ENCODE measurements at regions of chr15 and their contacts with region 1.

Region 1: DNA sequence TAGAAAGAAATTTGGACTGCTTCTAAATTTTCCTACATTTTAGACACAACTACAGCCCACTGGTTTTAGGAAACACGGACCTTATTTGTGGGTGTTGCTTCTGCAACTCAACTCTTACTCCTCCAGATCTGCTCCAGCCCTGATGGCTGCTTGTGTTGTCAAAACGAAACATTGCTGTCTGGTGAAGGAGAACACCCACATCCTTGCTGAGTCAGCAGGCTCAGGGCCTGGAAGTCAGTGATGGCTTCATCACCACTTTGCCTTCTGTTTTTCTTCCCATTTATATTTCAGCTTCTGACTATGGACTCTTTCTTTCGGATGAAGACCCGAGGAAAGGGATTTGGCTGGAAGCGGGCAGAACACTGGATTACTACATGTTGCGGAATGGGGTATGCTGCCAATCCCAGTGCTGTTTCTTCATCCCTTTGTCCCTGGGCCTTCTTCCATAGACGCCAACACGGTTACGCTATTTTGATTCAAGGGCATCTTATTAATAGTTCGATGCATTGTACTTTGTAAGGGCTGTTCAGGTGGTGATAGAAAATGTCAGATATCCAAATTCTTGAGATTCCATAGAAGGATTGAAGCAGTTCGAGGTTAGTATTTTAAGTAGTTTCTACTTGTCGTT is 392.6 kb upstream of the TPM1 start:
- DNase-seq: no peak
- H3K4me3 ChIP-seq: no peak overlapping the region
- H3K27ac ChIP-seq: no peak overlapping the region
- H3K4me1 ChIP-seq: peaks cover 0 to 8% (median 4%) of the 10 kb centered on the region in 4 donors
- H3K27me3 ChIP-seq: no peaks in the 10 kb centered on the region
- CTCF ChIP-seq: no peak
- EP300 ChIP-seq: no peak
- POLR2A ChIP-seq: no peak

Region 2: GRCh38 chr15:62406305-62406891 is 243.5 kb before region 1 on chr15:
- intact Hi-C with region 1: loop called (anchors 5 kb)
- DNase-seq: no peak
- H3K4me3 ChIP-seq: no peak overlapping the region
- H3K27ac ChIP-seq: no peak overlapping the region
- H3K4me1 ChIP-seq: peaks cover 0 to 37% (median 3%) of the 10 kb centered on the region in 4 donors
- H3K27me3 ChIP-seq: no peaks in the 10 kb centered on the region
- CTCF ChIP-seq: no peak
- EP300 ChIP-seq: no peak
- POLR2A ChIP-seq: no peak

Region 3: DNA sequence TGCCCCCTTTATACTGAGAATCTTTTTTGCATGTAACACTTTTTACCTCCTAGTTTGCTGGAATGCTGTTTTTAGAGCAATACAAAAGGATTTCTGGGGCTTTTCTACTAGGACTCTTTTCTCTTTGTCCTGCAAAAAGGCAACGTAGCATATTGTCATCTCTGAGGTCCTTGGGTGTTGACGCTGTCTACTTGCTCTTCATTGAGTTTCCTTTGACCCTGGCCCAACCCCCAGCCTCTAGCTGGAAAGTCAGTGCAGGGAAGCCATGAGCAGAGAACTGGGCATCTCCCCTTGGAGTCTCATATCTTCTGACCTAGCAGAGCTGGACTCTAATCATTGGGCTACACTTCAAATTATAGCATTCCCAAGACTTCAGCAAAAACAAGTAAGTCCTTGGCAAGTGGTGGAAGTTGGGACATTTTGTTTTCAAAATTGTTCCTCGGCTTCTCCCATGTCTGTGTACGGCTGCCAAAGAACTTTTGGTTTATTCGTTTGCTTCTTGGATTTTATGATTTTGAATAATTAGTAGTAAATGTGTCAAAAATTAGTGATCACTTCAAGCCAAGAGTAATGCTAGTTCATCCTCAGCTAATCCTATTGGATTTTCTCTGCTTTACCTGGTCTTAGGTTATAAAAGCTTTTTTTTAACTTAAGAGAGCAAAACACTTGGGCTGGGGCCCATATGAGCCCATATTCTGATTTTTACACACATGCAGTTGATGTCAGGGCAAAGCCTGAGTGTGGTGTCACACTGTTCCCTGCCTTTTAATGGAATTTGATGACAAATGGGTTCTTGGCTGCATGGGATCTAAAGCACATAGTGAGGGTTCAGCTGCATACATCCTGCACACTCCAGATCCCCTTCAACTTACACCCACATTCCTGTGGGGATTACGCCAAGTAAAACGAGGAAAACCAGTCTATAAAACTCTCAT is 65.3 kb before region 1 on chr15:
- intact Hi-C with region 1: no loop called
- DNase-seq: no peak
- H3K4me3 ChIP-seq: no peak overlapping the region
- H3K27ac ChIP-seq: no peak overlapping the region
- H3K4me1 ChIP-seq: peaks cover 0 to 21% (median 6%) of the 10 kb centered on the region in 4 donors
- H3K27me3 ChIP-seq: no peaks in the 10 kb centered on the region
- CTCF ChIP-seq: no peak
- EP300 ChIP-seq: no peak
- POLR2A ChIP-seq: no peak

Region 4: DNA sequence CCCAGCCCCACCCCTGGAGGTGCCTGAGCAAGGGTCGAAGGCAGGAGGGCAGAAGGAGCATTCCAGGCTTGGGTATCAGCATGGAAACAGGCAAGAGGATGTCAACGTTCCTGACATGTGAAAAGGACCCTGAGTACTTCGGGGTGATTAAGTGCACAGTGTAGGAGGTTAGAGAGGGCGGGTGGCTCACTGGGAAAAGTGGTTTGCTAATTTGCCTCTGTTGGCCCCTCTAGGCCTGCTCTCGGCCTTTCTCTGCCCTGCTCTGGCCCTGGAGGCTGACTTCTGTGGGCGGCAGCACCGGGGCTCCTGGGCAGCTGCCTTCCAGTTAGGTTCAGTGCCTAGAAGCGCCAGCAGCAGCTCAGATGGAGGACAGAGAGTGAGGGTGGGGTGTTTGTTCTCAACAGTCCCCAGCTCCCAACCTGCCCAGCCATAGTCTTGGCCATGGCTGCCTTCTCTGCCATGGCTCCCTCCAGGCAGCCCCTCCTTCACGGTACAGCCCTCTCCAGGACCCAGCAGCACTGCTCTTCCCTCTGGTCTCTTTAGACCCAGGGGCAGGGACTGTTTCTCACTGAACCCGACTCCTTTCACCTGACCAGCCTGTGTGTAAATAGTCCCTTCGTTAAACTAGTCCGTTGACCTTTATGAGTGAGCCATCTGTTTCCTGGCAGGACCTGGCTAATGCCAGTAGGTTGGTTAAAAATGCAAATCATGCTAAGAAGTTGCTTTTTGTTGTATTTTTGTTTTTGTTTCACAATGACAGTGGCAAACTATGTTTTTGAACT is 285.6 kb after region 1 on chr15:
- intact Hi-C with region 1: no loop called
- DNase-seq: no peak
- H3K4me3 ChIP-seq: no peak overlapping the region
- H3K27ac ChIP-seq: peak overlapping the region in 1 of 5 donors; percentile 35
- H3K4me1 ChIP-seq: peaks cover 12 to 21% (median 15%) of the 10 kb centered on the region in 4 donors
- H3K27me3 ChIP-seq: no peaks in the 10 kb centered on the region
- CTCF ChIP-seq: no peak
- EP300 ChIP-seq: no peak
- POLR2A ChIP-seq: no peak

Measured in stomach (tissue), 19 donors.